ENCODE measurements at regions of chr2 and their contacts with region 1.

Region 1: GRCh38 chr2:126527836-126528507 is 128.0 kb upstream of the GYPC start:
- DNase-seq: peak; percentile 81
- ATAC-seq: peak; percentile 78
- H3K4me3 Mint-ChIP-seq: no peak overlapping the region
- H3K27ac Mint-ChIP-seq: no peak overlapping the region
- H3K4me1 Mint-ChIP-seq: no peaks in the 10 kb centered on the region
- H3K27me3 Mint-ChIP-seq: peaks cover 4% of the 10 kb centered on the region

Region 2: DNA sequence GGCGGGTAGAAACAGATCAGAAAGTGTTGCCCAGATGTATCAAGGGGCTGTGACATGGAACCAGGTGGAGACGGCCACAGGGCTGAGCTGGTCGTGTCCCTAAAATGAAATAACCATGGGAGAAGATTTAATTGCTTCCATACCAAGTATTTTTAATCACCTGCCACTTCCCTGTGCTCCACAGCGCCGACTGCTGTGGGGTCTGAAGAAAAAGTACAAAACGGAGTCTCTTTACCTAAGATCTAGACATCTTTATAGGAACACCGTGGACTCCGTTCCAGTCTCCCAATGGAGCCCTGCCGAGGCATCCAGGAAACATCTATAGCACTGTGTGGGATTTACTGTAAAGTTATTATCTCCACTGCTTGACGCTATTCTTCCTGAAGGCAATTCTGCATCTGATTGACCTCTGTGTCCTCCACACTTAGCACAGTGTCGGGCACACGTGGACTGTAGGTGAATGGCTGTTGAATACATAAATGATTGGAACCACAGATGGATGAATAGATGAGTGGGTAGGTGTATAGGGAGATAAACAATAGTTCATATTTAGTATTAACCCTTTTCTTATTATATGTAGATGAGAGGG is 106.4 kb after region 1 on chr2:
- CTCF ChIA-PET with region 1: interaction called, 11 read pairs
- POLR2A ChIA-PET with region 1: no interaction called
- DNase-seq: peak; percentile 39
- ATAC-seq: no peak
- H3K4me3 Mint-ChIP-seq: no peak overlapping the region
- H3K27ac Mint-ChIP-seq: no peak overlapping the region
- H3K4me1 Mint-ChIP-seq: no peaks in the 10 kb centered on the region
- H3K27me3 Mint-ChIP-seq: peaks cover 13% of the 10 kb centered on the region

Region 3: DNA sequence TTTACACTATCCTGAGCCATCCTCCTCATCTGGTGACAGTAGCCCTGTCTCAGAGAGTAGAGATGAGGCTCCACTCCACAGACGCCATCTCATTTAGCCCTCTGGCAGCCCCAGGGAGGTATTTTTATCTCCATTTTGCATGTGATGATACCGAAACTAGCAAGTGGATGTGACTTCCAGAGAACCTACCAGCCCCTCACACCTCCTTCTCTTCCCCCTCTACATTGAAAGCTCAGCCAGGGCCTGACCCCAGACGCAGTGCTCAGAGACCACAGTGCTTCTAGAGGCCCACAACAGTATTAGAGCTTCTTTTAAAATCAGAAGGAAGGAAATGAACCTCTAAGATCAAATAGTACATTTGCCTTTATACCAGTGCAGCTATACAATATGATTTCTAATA is 136.3 kb after region 1 on chr2:
- CTCF ChIA-PET with region 1: interaction called, 16 read pairs
- POLR2A ChIA-PET with region 1: no interaction called
- DNase-seq: peak; percentile 71
- ATAC-seq: peak; percentile 75
- H3K4me3 Mint-ChIP-seq: peak overlapping the region; percentile 48
- H3K27ac Mint-ChIP-seq: peak overlapping the region; percentile 95
- H3K4me1 Mint-ChIP-seq: peaks cover 83% of the 10 kb centered on the region
- H3K27me3 Mint-ChIP-seq: no peaks in the 10 kb centered on the region

Region 4: GRCh38 chr2:126719833-126720351 is 191.9 kb after region 1 on chr2:
- CTCF ChIA-PET with region 1: no interaction called
- POLR2A ChIA-PET with region 1: no interaction called
- DNase-seq: peak; percentile 4
- ATAC-seq: no peak
- H3K4me3 Mint-ChIP-seq: no peak overlapping the region
- H3K27ac Mint-ChIP-seq: no peak overlapping the region
- H3K4me1 Mint-ChIP-seq: no peaks in the 10 kb centered on the region
- H3K27me3 Mint-ChIP-seq: no peaks in the 10 kb centered on the region

Region 5: GRCh38 chr2:126809340-126809739 is 281.4 kb after region 1 on chr2:
- CTCF ChIA-PET with region 1: no interaction called
- POLR2A ChIA-PET with region 1: no interaction called
- DNase-seq: no peak
- ATAC-seq: no peak
- H3K4me3 Mint-ChIP-seq: no peak overlapping the region
- H3K27ac Mint-ChIP-seq: no peak overlapping the region
- H3K4me1 Mint-ChIP-seq: no peaks in the 10 kb centered on the region
- H3K27me3 Mint-ChIP-seq: peaks cover 12% of the 10 kb centered on the region

Region 6: GRCh38 chr2:126971481-126972278 is 443.7 kb after region 1 on chr2:
- CTCF ChIA-PET with region 1: interaction called, 14 read pairs
- POLR2A ChIA-PET with region 1: no interaction called
- DNase-seq: peak; percentile 73
- ATAC-seq: peak; percentile 94
- H3K4me3 Mint-ChIP-seq: peak overlapping the region; percentile 41
- H3K27ac Mint-ChIP-seq: no peak overlapping the region
- H3K4me1 Mint-ChIP-seq: no peaks in the 10 kb centered on the region
- H3K27me3 Mint-ChIP-seq: peaks cover 28% of the 10 kb centered on the region